ENCODE measurements at regions of chr20 and their contacts with region 1.

Region 1: GRCh38 chr20:35994994-35995453 is 26.6 kb downstream of the CNBD2 start:
- DNase-seq: peak; percentile 85
- H3K4me3 Mint-ChIP-seq: no peak overlapping the region
- H3K27ac Mint-ChIP-seq: no peak overlapping the region
- H3K4me1 Mint-ChIP-seq: peaks cover 7% of the 10 kb centered on the region
- H3K27me3 Mint-ChIP-seq: peaks cover under 1% of the 10 kb centered on the region
- CTCF ChIP-seq: peak; percentile 86

Region 2: GRCh38 chr20:35978041-35978513 is 16.9 kb before region 1 on chr20:
- CTCF ChIA-PET with region 1: interaction called, 141 read pairs
- POLR2A ChIA-PET with region 1: interaction called, 4 read pairs
- intact Hi-C with region 1: no loop called
- DNase-seq: peak; percentile 45
- H3K4me3 Mint-ChIP-seq: no peak overlapping the region
- H3K27ac Mint-ChIP-seq: no peak overlapping the region
- H3K4me1 Mint-ChIP-seq: peaks cover 6% of the 10 kb centered on the region
- H3K27me3 Mint-ChIP-seq: no peaks in the 10 kb centered on the region
- CTCF ChIP-seq: no peak

Region 3: DNA sequence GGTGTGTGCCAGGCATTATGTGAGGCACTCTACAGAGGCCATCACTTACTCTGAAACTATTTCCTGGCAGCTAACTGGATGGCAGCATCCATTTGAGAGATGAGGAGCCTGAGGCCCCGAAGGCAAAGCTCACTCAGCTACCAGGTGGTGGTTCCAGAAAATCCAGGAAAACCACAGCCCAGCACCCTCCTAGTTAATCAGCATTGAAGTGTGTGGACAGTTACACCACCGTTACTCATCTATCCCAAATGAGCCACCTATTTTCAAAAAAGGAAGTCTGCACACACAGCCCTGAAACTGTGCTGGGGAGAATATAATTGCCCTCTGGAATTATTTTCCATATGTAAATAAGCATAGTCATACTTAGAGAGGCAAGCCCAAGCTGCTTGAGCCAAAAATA is 40.7 kb after region 1 on chr20:
- CTCF ChIA-PET with region 1: interaction called, 15 read pairs
- POLR2A ChIA-PET with region 1: no interaction called
- intact Hi-C with region 1: loop called (anchors 5 kb)
- DNase-seq: peak; percentile 67
- H3K4me3 Mint-ChIP-seq: no peak overlapping the region
- H3K27ac Mint-ChIP-seq: no peak overlapping the region
- H3K4me1 Mint-ChIP-seq: no peaks in the 10 kb centered on the region
- H3K27me3 Mint-ChIP-seq: no peaks in the 10 kb centered on the region
- CTCF ChIP-seq: no peak

Region 4: GRCh38 chr20:36085686-36086267 is 90.8 kb after region 1 on chr20:
- CTCF ChIA-PET with region 1: interaction called, 25 read pairs
- POLR2A ChIA-PET with region 1: interaction called, 6 read pairs
- intact Hi-C with region 1: no loop called
- DNase-seq: peak; percentile 92
- H3K4me3 Mint-ChIP-seq: peak overlapping the region; percentile 45
- H3K27ac Mint-ChIP-seq: peak overlapping the region; percentile 85
- H3K4me1 Mint-ChIP-seq: peaks cover 23% of the 10 kb centered on the region
- H3K27me3 Mint-ChIP-seq: no peaks in the 10 kb centered on the region
- CTCF ChIP-seq: no peak

Region 5: GRCh38 chr20:36113566-36114250 is 118.7 kb after region 1 on chr20:
- CTCF ChIA-PET with region 1: interaction called, 43 read pairs
- POLR2A ChIA-PET with region 1: no interaction called
- intact Hi-C with region 1: no loop called
- DNase-seq: no peak
- H3K4me3 Mint-ChIP-seq: no peak overlapping the region
- H3K27ac Mint-ChIP-seq: no peak overlapping the region
- H3K4me1 Mint-ChIP-seq: peaks cover 6% of the 10 kb centered on the region
- H3K27me3 Mint-ChIP-seq: no peaks in the 10 kb centered on the region
- CTCF ChIP-seq: no peak

Region 6: GRCh38 chr20:36193977-36194712 is 199.1 kb after region 1 on chr20:
- CTCF ChIA-PET with region 1: interaction called, 84 read pairs
- POLR2A ChIA-PET with region 1: no interaction called
- intact Hi-C with region 1: loop called (anchors 1 kb)
- DNase-seq: no peak
- H3K4me3 Mint-ChIP-seq: no peak overlapping the region
- H3K27ac Mint-ChIP-seq: no peak overlapping the region
- H3K4me1 Mint-ChIP-seq: no peaks in the 10 kb centered on the region
- H3K27me3 Mint-ChIP-seq: no peaks in the 10 kb centered on the region
- CTCF ChIP-seq: no peak

Region 7: GRCh38 chr20:36320961-36321695 is 326.1 kb after region 1 on chr20:
- CTCF ChIA-PET with region 1: no interaction called
- POLR2A ChIA-PET with region 1: no interaction called
- intact Hi-C with region 1: no loop called
- DNase-seq: no peak
- H3K4me3 Mint-ChIP-seq: no peak overlapping the region
- H3K27ac Mint-ChIP-seq: no peak overlapping the region
- H3K4me1 Mint-ChIP-seq: no peaks in the 10 kb centered on the region
- H3K27me3 Mint-ChIP-seq: peaks cover 72% of the 10 kb centered on the region
- CTCF ChIP-seq: no peak

Region 8: DNA sequence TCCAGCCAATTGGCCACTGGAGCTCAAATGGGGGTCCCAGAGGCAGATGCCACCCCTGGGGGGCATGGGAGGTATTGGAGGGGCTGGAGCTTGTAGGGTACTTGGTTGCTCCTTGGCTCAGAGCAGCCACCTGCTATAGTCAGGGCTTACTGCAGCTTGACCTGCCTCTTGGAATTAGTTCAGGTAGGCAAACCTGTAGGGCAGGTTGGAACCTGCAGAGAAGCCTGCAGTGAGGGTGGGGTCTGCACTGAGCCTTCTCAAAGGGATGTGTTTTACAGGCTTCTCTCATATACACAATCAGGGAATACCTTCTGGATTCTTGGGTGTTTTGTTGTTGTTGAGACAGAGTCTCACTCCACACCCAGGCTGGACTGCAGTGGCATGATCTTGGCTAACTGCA is 452.1 kb after region 1 on chr20:
- CTCF ChIA-PET with region 1: interaction called, 4 read pairs
- POLR2A ChIA-PET with region 1: no interaction called
- intact Hi-C with region 1: loop called (anchors 10 kb)
- DNase-seq: no peak
- H3K4me3 Mint-ChIP-seq: no peak overlapping the region
- H3K27ac Mint-ChIP-seq: no peak overlapping the region
- H3K4me1 Mint-ChIP-seq: no peaks in the 10 kb centered on the region
- H3K27me3 Mint-ChIP-seq: peaks cover 12% of the 10 kb centered on the region
- CTCF ChIP-seq: no peak

Measured in MCF 10A (cell line).